Psoas muscle (tissue), 8 donors: ENCODE measurements at regions of chr3 and their contacts with region 1.

Region 1: GRCh38 chr3:67654099-67654843 is at the start of gene SUCLG2:
- DNase-seq: peak; percentile 93 to 96
- ATAC-seq: peak; percentile 95 to 98 (median 96)
- H3K4me3 ChIP-seq: peak within 1 kb of the TSS; percentile 97
- H3K27ac ChIP-seq: peak within 1 kb of the TSS; percentile 98
- H3K4me1 ChIP-seq: peaks cover 25% of the 10 kb centered on the region
- H3K27me3 ChIP-seq: no peaks in the 10 kb centered on the region
- CTCF ChIP-seq: peak; percentile 11
- total RNA-seq, gene SUCLG2: 74.5 to 102 (median 84.9) TPM

Region 2: DNA sequence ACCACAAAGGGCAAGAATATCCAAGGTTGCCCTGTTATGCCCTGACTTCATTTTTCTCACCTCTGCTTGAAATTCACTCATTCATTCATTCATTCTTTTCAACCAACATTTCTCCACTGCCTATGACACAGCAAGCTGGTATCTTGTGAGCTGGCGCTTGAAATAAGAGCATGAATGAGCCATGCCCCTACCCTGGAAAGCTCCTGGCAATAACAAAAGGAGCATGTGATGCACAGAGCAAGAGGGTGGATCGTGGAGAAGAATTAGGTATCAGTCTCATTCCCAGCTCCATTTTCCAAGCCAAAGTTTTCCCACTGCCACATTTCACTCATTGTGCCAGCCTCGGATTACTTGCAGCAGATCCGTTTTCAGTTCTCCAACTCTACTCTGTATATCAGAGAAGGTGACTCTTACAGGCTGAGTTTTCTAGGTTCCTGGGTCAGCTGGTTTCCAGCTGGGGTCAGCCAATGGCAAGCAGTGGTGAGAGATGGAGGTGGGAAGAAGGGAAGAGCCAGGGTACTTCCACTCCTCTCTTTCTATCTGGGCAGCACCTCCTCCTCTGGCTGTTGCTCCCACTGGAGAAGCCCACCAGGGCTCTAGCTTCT is 144.7 kb before region 1 on chr3:
- intact Hi-C with region 1: loop called in 1 of 2 experiments (anchors 5 kb)
- DNase-seq: no peak
- ATAC-seq: peak; percentile 96 to 98 (median 97)
- H3K4me3 ChIP-seq: no peak overlapping the region
- H3K27ac ChIP-seq: peak overlapping the region; percentile 77
- H3K4me1 ChIP-seq: peaks cover 19% of the 10 kb centered on the region
- H3K27me3 ChIP-seq: no peaks in the 10 kb centered on the region
- CTCF ChIP-seq: no peak

Region 3: GRCh38 chr3:67578416-67578815 is 75.9 kb before region 1 on chr3:
- intact Hi-C with region 1: no loop called
- DNase-seq: no peak
- ATAC-seq: no peak
- H3K4me3 ChIP-seq: no peak overlapping the region
- H3K27ac ChIP-seq: no peak overlapping the region
- H3K4me1 ChIP-seq: no peaks in the 10 kb centered on the region
- H3K27me3 ChIP-seq: no peaks in the 10 kb centered on the region
- CTCF ChIP-seq: no peak

Region 4: GRCh38 chr3:67940210-67940952 is 286.1 kb after region 1 on chr3:
- intact Hi-C with region 1: no loop called
- DNase-seq: no peak
- ATAC-seq: no peak
- H3K4me3 ChIP-seq: no peak overlapping the region
- H3K27ac ChIP-seq: no peak overlapping the region
- H3K4me1 ChIP-seq: no peaks in the 10 kb centered on the region
- H3K27me3 ChIP-seq: no peaks in the 10 kb centered on the region
- CTCF ChIP-seq: no peak

Region 5: GRCh38 chr3:68089572-68090011 is 435.3 kb after region 1 on chr3:
- intact Hi-C with region 1: no loop called
- DNase-seq: no peak
- ATAC-seq: no peak
- H3K4me3 ChIP-seq: no peak overlapping the region
- H3K27ac ChIP-seq: no peak overlapping the region
- H3K4me1 ChIP-seq: no peaks in the 10 kb centered on the region
- H3K27me3 ChIP-seq: no peaks in the 10 kb centered on the region
- CTCF ChIP-seq: no peak